ENCODE measurements at regions of chr7 and their contacts with region 1.

Region 1: GRCh38 chr7:139645572-139646523 is 122.4 kb downstream of the CLEC2L start:
- DNase-seq: peak; percentile 87
- ATAC-seq: peak; percentile 35
- H3K4me3 Mint-ChIP-seq: no peak overlapping the region
- H3K27ac Mint-ChIP-seq: no peak overlapping the region
- H3K4me1 Mint-ChIP-seq: peaks cover 63% of the 10 kb centered on the region
- H3K27me3 Mint-ChIP-seq: no peaks in the 10 kb centered on the region
- CTCF ChIP-seq: peak; percentile 91

Region 2: DNA sequence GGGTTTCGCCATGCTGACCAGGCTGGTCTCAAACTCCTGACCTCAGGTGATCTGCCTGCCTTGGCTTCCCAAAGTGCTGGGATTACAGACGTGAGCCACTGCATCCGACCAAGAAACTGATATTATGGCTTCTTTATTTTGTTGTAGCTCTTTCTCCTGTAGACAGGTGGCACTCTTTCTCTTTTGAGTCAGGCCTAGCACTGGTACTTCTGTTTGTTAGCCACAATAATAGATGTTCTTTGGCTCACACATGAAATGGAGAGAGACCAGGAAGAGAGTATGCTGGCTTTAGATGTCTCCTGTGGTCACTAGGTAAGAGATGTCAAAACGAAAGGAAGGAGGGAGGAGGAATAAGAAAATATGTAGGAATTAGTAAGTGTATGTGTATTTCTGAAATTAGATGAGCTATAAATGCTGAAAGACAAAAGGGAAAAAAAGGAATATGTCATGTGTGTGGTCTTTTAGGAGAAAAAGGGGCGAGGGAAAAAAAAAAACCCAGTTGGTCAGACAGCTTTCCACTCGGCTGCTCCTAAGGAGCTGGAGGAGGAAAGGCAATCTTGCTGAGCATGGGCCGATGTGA is 43.6 kb before region 1 on chr7:
- CTCF ChIA-PET with region 1: interaction called, 14 read pairs
- POLR2A ChIA-PET with region 1: no interaction called
- intact Hi-C with region 1: no loop called
- DNase-seq: no peak
- ATAC-seq: peak; percentile 74
- H3K4me3 Mint-ChIP-seq: no peak overlapping the region
- H3K27ac Mint-ChIP-seq: no peak overlapping the region
- H3K4me1 Mint-ChIP-seq: no peaks in the 10 kb centered on the region
- H3K27me3 Mint-ChIP-seq: no peaks in the 10 kb centered on the region
- CTCF ChIP-seq: peak; percentile 69

Region 3: DNA sequence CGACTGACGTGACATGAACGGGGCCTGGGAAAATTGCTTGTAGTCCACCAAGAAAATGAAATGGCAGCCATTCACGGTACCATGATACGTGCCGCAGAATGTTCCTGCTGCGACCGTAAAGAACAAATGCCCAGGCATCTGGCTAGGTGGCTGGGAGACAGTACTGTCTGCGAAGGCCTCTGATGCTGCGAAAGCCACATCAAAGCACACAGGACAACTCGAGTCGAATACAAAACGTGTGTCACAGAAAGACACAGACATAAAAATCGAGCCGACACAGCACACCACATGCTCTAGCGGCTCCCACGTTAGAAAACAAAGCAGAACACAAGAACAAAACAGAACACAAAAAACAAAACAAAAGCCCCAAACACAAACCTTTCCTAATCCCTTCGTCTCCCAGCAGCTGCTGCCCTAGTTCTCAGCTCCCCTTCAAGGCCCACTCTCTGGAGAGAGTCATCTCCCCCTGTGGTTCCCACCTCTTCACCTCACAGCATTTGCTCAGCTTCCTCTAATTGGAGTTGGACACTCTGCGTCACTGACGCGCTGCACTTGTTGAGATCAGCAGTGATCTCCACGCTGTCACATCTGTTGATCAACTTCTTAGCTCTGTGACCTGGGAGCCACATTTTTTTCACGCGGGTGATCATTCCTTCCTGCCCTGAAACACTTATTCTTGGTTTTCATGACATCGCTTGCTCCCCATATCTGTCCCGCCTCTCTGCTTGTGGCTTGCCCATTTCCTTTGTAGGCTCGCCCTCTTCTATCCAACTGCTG is 10.1 kb before region 1 on chr7:
- CTCF ChIA-PET with region 1: interaction called, 51 read pairs
- POLR2A ChIA-PET with region 1: interaction called, 3 read pairs
- intact Hi-C with region 1: no loop called
- DNase-seq: peak; percentile 82
- ATAC-seq: peak; percentile 95
- H3K4me3 Mint-ChIP-seq: peak overlapping the region; percentile 63
- H3K27ac Mint-ChIP-seq: peak overlapping the region; percentile 90
- H3K4me1 Mint-ChIP-seq: peaks cover 44% of the 10 kb centered on the region
- H3K27me3 Mint-ChIP-seq: no peaks in the 10 kb centered on the region
- CTCF ChIP-seq: no peak

Region 4: GRCh38 chr7:139680676-139681462 is 35.0 kb after region 1 on chr7:
- CTCF ChIA-PET with region 1: interaction called, 8 read pairs
- POLR2A ChIA-PET with region 1: interaction called, 4 read pairs
- intact Hi-C with region 1: loop called (anchors 1 kb)
- DNase-seq: peak; percentile 94
- ATAC-seq: peak; percentile 79
- H3K4me3 Mint-ChIP-seq: peak overlapping the region; percentile 39
- H3K27ac Mint-ChIP-seq: peak overlapping the region; percentile 95
- H3K4me1 Mint-ChIP-seq: peaks cover 56% of the 10 kb centered on the region
- H3K27me3 Mint-ChIP-seq: no peaks in the 10 kb centered on the region
- CTCF ChIP-seq: no peak

Region 5: GRCh38 chr7:139767561-139767982 is 121.7 kb after region 1 on chr7:
- CTCF ChIA-PET with region 1: interaction called, 27 read pairs
- POLR2A ChIA-PET with region 1: interaction called, 5 read pairs
- intact Hi-C with region 1: no loop called
- DNase-seq: peak; percentile 16
- ATAC-seq: peak; percentile 87
- H3K4me3 Mint-ChIP-seq: no peak overlapping the region
- H3K27ac Mint-ChIP-seq: peak overlapping the region; percentile 92
- H3K4me1 Mint-ChIP-seq: peaks cover 74% of the 10 kb centered on the region
- H3K27me3 Mint-ChIP-seq: no peaks in the 10 kb centered on the region
- CTCF ChIP-seq: no peak

Region 6: DNA sequence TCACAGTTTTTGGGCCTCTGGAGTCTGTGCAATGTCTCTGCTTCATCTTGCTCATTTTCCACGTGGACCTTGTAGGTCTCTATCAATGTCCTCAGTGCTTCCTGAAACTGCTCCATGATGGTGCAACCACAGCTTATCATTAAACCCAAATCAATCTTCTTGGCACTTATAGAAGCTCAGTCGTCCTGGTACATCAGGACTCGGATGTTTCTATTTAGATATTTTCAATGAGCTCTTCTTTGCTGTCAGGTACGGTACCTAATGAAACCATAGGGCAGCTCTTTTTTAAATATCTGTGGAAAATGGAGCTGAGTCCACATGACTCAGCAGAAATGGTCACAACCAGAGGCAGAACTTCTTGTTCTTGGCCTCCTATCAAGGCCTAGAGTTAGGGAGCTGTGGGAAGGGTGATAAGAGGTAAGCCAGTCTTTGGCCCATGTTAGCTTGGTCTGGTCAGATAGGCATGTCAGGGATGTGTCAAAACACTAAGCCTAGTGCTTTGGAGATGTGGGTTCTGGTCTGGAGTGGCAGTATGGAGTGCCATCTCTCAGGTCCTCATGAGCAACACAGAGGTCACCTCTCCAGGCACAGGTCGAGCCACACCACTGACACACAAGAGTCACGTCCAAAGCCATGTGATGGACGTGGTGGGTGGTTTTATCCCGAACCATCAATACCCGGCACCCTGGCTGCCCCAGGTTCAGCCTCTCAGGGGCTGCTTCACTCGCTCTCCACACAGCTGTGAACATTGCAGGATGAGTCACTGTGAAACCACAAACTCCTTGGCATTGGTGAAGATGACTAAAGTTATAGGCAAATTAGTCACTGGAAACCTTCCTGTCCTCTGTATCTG is 270.2 kb after region 1 on chr7:
- CTCF ChIA-PET with region 1: interaction called, 16 read pairs
- POLR2A ChIA-PET with region 1: no interaction called
- intact Hi-C with region 1: no loop called
- DNase-seq: peak; percentile 87
- ATAC-seq: peak; percentile 89
- H3K4me3 Mint-ChIP-seq: no peak overlapping the region
- H3K27ac Mint-ChIP-seq: peak overlapping the region; percentile 54
- H3K4me1 Mint-ChIP-seq: peaks cover 18% of the 10 kb centered on the region
- H3K27me3 Mint-ChIP-seq: peaks cover 4% of the 10 kb centered on the region
- CTCF ChIP-seq: no peak

Measured in activated CD8-positive, alpha-beta T cell treated with anti-CD3 and anti-CD28 coated beads for 36 hours (primary cell).